Mammary epithelial cell (primary cell): ENCODE measurements at regions of chr19 and their contacts with region 1.

Region 1: DNA sequence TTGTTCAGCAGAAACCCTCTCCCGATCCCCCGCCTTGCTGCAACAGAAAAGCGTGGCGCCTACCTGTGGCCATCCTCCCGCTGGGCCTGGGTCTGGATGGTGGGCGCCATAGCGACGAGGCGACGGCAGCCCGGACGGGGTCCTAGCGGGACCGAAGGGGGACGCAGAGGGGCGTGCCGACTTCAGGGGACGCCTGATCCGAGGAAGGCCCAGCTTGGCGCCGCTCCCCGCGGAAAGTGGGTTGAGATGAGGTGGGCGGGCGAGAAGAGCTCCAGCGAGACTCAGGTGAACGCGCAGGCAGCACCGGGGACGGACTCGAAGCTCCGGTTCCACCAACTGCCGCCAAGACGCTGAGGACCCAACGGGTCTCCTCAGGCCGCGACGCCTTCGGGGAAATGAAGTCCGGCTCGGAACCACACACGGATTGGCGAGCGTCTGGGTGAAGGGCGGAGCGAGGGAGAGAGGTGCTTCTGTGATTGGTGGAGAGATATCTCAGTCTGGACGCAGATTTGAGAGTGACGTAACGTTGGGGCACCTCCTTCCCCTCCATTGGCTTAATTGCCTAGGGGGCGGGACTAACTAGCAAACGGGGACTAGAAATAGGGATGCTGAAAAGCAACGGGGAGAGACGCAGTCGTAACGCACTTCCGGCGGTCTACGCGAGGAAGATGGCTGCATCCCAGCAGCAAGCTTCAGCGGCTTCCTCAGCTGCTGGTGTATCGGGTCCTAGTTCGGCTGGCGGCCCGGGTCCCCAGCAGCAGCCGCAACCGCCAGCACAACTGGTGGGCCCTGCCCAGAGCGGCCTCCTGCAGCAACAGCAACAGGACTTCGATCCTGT is at the starts of genes MED29 and PAF1:
- DNase-seq: peak; percentile 100
- H3K4me3 ChIP-seq: peak within 1 kb of the TSS; percentile 86 to 93 (median 90)
- H3K27ac ChIP-seq: peak within 1 kb of the TSS; percentile 95
- H3K4me1 ChIP-seq: peaks cover 14% of the 10 kb centered on the region
- H3K27me3 ChIP-seq: no peaks in the 10 kb centered on the region
- CTCF ChIP-seq: peak in 1 of 2 donors; percentile 12
- total RNA-seq, gene MED29: 19.5 to 29.3 TPM
- total RNA-seq, gene PAF1: 25.5 to 45.8 TPM

Region 2: GRCh38 chr19:39212375-39212742 is 178.6 kb before region 1 on chr19:
- CTCF ChIA-PET with region 1: no interaction called
- dilution Hi-C with region 1: loop called (anchors 10 kb)
- in situ Hi-C with region 1: no loop called
- intact Hi-C with region 1: no loop called
- DNase-seq: no peak
- H3K4me3 ChIP-seq: no peak overlapping the region
- H3K27ac ChIP-seq: no peak overlapping the region
- H3K4me1 ChIP-seq: no peaks in the 10 kb centered on the region
- H3K27me3 ChIP-seq: no peaks in the 10 kb centered on the region
- CTCF ChIP-seq: peak in 1 of 2 donors; percentile 32

Region 3: DNA sequence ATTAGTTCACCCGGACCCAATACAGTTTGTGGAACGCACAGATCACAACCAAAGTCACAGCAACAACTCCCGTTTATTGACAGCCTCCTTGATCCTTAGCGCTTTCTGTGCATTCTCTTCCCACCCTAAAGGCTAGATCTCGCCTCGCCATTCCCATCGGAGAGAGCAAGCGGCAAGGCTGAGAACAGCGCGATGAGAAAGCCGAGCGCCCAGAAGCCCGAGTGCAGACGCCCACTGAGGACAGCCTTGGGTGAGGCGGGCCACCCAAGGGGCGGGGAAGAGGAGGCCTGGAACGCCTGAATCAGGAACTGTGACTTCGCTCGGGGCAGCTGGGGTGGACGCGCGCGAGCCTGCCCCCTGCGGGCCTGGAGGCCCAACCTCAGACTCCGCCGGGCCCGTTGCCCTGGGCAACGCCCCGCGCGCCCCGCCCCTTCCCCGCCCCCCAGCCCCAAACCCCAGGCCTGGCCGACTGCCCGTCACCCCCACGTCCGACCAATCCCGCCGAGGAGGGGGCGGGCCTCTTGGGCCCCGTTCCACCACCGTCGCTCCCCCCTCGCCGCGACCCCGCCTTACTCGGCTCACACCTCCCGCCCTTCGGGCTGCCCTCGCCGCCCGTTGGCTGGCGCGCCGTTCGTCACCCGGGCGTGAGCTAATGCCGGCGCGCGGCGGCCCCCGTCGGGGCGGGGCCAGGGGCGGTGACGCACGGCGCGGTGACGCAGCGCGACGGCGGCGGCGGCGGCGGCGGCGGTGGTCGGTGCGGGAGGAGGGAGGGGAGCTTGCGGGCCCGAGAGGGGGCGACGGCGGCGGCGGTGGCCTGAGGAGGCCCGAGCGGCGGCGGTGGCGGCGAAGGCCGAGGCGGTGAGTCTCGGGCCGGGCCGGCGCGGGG is 49.0 kb before region 1 on chr19 and contains the start of gene SAMD4B:
- CTCF ChIA-PET with region 1: no interaction called
- dilution Hi-C with region 1: loop called (anchors 10 kb)
- in situ Hi-C with region 1: no loop called
- intact Hi-C with region 1: no loop called
- DNase-seq: peak; percentile 96
- H3K4me3 ChIP-seq: peak within 1 kb of the TSS; percentile 79 to 83 (median 80)
- H3K27ac ChIP-seq: peak within 1 kb of the TSS; percentile 81
- H3K4me1 ChIP-seq: peaks cover 6% of the 10 kb centered on the region
- H3K27me3 ChIP-seq: no peaks in the 10 kb centered on the region
- CTCF ChIP-seq: peak; percentile 32 to 71
- total RNA-seq, gene SAMD4B: 54.3 to 95.2 TPM

Region 4: DNA sequence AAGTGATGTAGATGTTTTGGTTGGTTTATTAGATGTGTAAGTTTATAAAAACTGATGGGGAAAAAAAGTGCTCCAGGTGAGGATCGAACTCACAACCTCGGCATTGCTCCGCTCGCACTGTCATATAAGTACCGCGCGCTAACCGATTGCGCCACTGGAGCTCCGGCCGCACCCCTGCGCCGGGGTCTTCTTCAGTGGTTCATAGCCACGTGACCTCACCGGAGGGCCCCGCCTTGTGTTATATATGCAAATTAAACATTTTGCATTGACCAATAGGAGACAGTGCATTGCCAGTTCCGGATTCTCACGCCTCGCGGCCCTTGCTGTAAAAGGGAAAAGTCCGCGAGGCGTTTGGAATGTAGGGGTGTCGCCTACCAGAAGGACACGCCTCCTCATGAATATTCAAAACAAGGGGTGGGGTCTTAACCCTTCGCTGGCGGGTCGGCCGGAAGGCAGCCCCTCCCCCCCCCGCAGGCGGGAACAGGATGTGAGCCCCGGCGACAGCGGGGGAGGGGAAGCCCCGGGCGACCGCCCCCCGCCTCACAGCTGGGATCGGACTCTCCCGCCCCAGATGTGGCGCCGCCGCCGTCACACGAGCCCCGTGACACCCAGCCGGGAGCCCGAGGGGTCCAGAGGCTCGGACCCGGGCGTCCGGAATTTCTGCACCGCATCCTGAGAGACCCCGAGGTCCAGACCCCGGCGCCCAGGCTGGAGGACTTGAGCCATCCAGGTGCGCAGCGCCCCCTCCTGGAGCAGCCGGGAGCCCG is 21.3 kb after region 1 on chr19 and contains the start of gene PLEKHG2:
- CTCF ChIA-PET with region 1: no interaction called
- dilution Hi-C with region 1: no loop called
- in situ Hi-C with region 1: no loop called
- intact Hi-C with region 1: loop called (anchors 1 kb)
- DNase-seq: peak; percentile 99
- H3K4me3 ChIP-seq: peak within 1 kb of the TSS; percentile 70 to 93 (median 92)
- H3K27ac ChIP-seq: peak within 1 kb of the TSS; percentile 97
- H3K4me1 ChIP-seq: peaks cover 38% of the 10 kb centered on the region
- H3K27me3 ChIP-seq: no peaks in the 10 kb centered on the region
- CTCF ChIP-seq: peak; percentile 42 to 94
- total RNA-seq, gene PLEKHG2: 15.5 to 40.6 TPM

Region 5: DNA sequence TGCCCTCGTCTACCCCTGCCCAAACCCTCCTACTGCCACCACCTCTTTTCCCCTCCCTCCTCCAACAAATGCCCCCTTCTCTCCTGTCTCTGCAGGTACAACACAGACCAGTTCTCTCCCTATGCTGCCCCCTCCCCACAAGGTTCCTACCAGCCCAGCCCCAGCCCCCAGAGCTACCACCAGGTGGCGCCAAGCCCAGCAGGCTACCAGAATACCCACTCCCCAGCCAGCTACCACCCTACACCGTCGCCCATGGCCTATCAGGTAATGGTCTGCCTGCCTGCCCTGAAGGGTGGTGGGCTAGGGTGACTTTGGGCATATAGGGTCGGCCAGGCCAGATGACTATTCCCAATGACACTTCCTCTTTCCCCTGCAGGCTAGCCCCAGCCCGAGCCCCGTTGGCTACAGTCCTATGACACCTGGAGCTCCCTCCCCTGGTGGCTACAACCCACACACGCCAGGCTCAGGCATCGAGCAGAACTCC is 83.2 kb after region 1 on chr19:
- CTCF ChIA-PET with region 1: no interaction called
- dilution Hi-C with region 1: loop called (anchors 5 kb)
- in situ Hi-C with region 1: no loop called
- intact Hi-C with region 1: no loop called
- DNase-seq: no peak
- H3K4me3 ChIP-seq: no peak overlapping the region
- H3K27ac ChIP-seq: no peak overlapping the region
- H3K4me1 ChIP-seq: no peaks in the 10 kb centered on the region
- H3K27me3 ChIP-seq: no peaks in the 10 kb centered on the region
- CTCF ChIP-seq: peak; percentile 66 to 89

Region 6: GRCh38 chr19:39539519-39540332 is 148.8 kb after region 1 on chr19 and contains the start of gene EID2:
- CTCF ChIA-PET with region 1: no interaction called
- dilution Hi-C with region 1: loop called (anchors 10 kb)
- in situ Hi-C with region 1: no loop called
- intact Hi-C with region 1: no loop called
- DNase-seq: peak; percentile 84
- H3K4me3 ChIP-seq: peak within 1 kb of the TSS; percentile 73 to 90 (median 88)
- H3K27ac ChIP-seq: peak within 1 kb of the TSS; percentile 69
- H3K4me1 ChIP-seq: peaks cover 36% of the 10 kb centered on the region
- H3K27me3 ChIP-seq: no peaks in the 10 kb centered on the region
- CTCF ChIP-seq: peak; percentile 66 to 85
- total RNA-seq, gene EID2: 9.7 to 15.0 TPM